ENCODE measurements at regions of chr5 and their contacts with region 1.

Region 1: GRCh38 chr5:175534070-175534932 is 55.9 kb downstream of the SFXN1 start:
- DNase-seq: peak; percentile 77 to 92 (median 84)
- ATAC-seq: peak; percentile 84 to 98 (median 98)
- H3K4me3 ChIP-seq: peak overlapping the region in 2 of 12 donors; percentile 7 to 32
- H3K27ac ChIP-seq: no peak overlapping the region
- H3K4me1 ChIP-seq: peaks cover 0 to 9% (median 0%) of the 10 kb centered on the region in 12 donors
- H3K27me3 ChIP-seq: no peaks in the 10 kb centered on the region
- CTCF ChIP-seq: peak in 11 of 12 donors; percentile 84 to 99 (median 95)
- POLR2A ChIP-seq: no peak

Region 2: GRCh38 chr5:175181331-175181730 is 353.0 kb before region 1 on chr5:
- intact Hi-C with region 1: no loop called
- DNase-seq: no peak
- ATAC-seq: no peak
- H3K4me3 ChIP-seq: no peak overlapping the region
- H3K27ac ChIP-seq: no peak overlapping the region
- H3K4me1 ChIP-seq: peaks cover 0 to 8% (median 0%) of the 10 kb centered on the region in 12 donors
- H3K27me3 ChIP-seq: peaks cover 0 to 9% (median 0%) of the 10 kb centered on the region in 9 donors
- CTCF ChIP-seq: no peak
- POLR2A ChIP-seq: no peak

Region 3: GRCh38 chr5:175494280-175495183 is 39.8 kb before region 1 on chr5:
- intact Hi-C with region 1: no loop called
- DNase-seq: no peak
- ATAC-seq: no peak
- H3K4me3 ChIP-seq: no peak overlapping the region
- H3K27ac ChIP-seq: no peak overlapping the region
- H3K4me1 ChIP-seq: no peaks in the 10 kb centered on the region
- H3K27me3 ChIP-seq: no peaks in the 10 kb centered on the region
- CTCF ChIP-seq: no peak
- POLR2A ChIP-seq: no peak

Region 4: GRCh38 chr5:175729829-175730277 is 195.6 kb after region 1 on chr5:
- intact Hi-C with region 1: loop called in 1 of 10 experiments (anchors 5 kb)
- DNase-seq: peak; percentile 87 to 93 (median 88)
- ATAC-seq: peak; percentile 91 to 97 (median 94)
- H3K4me3 ChIP-seq: peak overlapping the region in 2 of 12 donors; percentile 12 to 23
- H3K27ac ChIP-seq: no peak overlapping the region
- H3K4me1 ChIP-seq: peaks cover 0 to 9% (median 0%) of the 10 kb centered on the region in 12 donors
- H3K27me3 ChIP-seq: peaks cover 0 to 34% (median 11%) of the 10 kb centered on the region in 9 donors
- CTCF ChIP-seq: peak; percentile 81 to 95 (median 88)
- POLR2A ChIP-seq: no peak